Activated CD8-positive, alpha-beta T cell treated with anti-CD3 and anti-CD28 coated beads, Interleukin-2, amount 10 ng/mL, durations not matched to agents 7 days and 5 days (primary cell): ENCODE measurements at regions of chr11 and their contacts with region 1.

Region 1: DNA sequence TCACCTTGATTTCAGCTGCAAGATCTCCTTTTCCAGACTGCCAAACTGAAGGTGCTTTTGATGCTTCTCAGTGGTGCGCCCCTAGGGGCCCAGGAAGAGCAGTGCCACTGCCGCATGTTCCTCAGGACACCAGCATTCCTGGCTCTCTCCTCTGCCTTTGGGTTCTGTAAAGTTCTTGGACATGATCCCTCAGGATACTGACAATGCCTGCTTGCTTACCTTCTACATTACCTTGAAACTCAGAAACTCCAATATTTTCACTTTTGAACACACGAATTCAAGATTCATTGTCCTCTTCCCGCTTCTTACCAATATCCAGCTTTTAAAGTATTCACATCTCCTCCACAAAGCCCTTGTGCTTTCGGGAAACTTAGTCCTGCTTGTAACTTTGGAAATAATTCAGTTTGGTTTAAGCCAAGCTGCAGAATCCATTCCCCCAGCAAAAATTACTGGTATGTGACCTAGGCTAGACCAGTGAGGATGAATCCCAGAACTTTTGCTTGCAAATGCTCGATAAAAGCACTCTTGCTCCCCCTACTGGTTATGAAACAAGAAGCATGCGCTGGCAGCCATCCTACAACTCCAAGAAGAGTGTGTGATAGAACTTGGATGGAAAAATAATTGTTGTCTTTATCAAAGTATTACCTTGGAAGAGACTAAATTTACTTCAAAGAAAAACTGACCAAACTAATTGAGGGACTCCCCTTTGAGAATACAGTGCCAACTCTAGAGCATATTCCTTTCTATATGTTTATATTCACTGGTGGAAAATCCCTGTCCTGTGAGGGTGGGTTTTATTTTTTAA is 16.5 kb upstream of the OR5B21 start:
- DNase-seq: peak; percentile 65
- ATAC-seq: peak; percentile 66
- H3K4me3 Mint-ChIP-seq: peak overlapping the region; percentile 60
- H3K27ac Mint-ChIP-seq: peak overlapping the region; percentile 88
- H3K4me1 Mint-ChIP-seq: peaks cover 52% of the 10 kb centered on the region
- H3K27me3 Mint-ChIP-seq: no peaks in the 10 kb centered on the region

Region 2: GRCh38 chr11:58498464-58498863 is 26.0 kb before region 1 on chr11:
- CTCF ChIA-PET with region 1: interaction called, 19 read pairs
- POLR2A ChIA-PET with region 1: no interaction called
- DNase-seq: peak; percentile 61
- ATAC-seq: peak; percentile 83
- H3K4me3 Mint-ChIP-seq: no peak overlapping the region
- H3K27ac Mint-ChIP-seq: peak overlapping the region; percentile 80
- H3K4me1 Mint-ChIP-seq: peaks cover 36% of the 10 kb centered on the region
- H3K27me3 Mint-ChIP-seq: no peaks in the 10 kb centered on the region

Region 3: GRCh38 chr11:58513747-58514367 is 10.6 kb before region 1 on chr11:
- CTCF ChIA-PET with region 1: interaction called, 13 read pairs
- POLR2A ChIA-PET with region 1: interaction called, 3 read pairs
- DNase-seq: peak; percentile 33
- ATAC-seq: no peak
- H3K4me3 Mint-ChIP-seq: no peak overlapping the region
- H3K27ac Mint-ChIP-seq: peak overlapping the region; percentile 15
- H3K4me1 Mint-ChIP-seq: no peaks in the 10 kb centered on the region
- H3K27me3 Mint-ChIP-seq: no peaks in the 10 kb centered on the region

Region 4: GRCh38 chr11:58579192-58580129 is 55.0 kb after region 1 on chr11:
- CTCF ChIA-PET with region 1: interaction called, 16 read pairs
- POLR2A ChIA-PET with region 1: interaction called, 5 read pairs
- DNase-seq: peak; percentile 94
- ATAC-seq: peak; percentile 53
- H3K4me3 Mint-ChIP-seq: peak overlapping the region; percentile 85
- H3K27ac Mint-ChIP-seq: peak overlapping the region; percentile 100
- H3K4me1 Mint-ChIP-seq: peaks cover 47% of the 10 kb centered on the region
- H3K27me3 Mint-ChIP-seq: no peaks in the 10 kb centered on the region